IMR-90 (cell line): ENCODE measurements at regions of chr9 and their contacts with region 1.

Region 1: DNA sequence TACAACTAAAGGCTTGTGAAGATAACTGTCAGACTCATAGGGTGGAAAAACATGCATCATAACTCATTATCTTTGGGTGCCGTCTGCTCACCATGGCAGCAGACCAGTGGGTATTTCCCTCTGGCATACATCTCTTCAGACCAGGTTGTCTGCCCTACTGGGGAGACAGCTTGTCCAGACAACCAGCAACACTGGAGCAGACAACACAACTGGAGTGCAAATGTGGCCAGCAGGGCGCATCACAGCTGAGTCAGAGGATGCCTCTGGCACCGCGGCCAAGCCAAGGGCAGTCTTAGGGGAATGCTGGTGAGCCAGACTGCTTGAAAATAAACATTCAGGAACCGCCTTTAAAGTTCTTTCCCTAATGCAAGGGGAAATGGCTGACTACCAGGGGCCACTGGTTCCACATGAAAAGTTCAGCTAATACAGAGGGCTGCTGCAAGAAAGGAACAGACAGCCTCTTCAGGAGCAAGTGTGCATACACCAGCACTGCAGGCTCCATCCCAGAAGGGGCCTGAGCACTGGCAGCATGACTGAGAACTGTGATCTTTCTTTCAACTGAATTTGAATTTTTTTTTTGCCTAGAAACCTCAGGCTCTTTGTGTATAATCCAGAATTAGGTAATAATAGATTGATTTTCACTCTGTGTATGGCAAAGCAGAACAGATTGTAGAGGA is 77.3 kb downstream of the MAMDC2 start:
- DNase-seq: peak; percentile 97
- ATAC-seq: peak; percentile 95
- H3K4me3 ChIP-seq: no peak overlapping the region
- H3K27ac ChIP-seq: peak overlapping the region; percentile 54
- H3K4me1 ChIP-seq: peaks cover 15% of the 10 kb centered on the region
- H3K27me3 ChIP-seq: no peaks in the 10 kb centered on the region
- CTCF ChIP-seq: peak; percentile 47
- POLR2A ChIP-seq: no peak
- RAD21 ChIP-seq: peak; percentile 47

Region 2: GRCh38 chr9:70020991-70021571 is 99.9 kb before region 1 on chr9:
- CTCF ChIA-PET with region 1: no interaction called
- POLR2A ChIA-PET with region 1: no interaction called
- dilution Hi-C with region 1: no loop called
- in situ Hi-C with region 1: no loop called
- intact Hi-C with region 1: no loop called
- DNase-seq: peak; percentile 97
- ATAC-seq: peak; percentile 97
- H3K4me3 ChIP-seq: no peak overlapping the region
- H3K27ac ChIP-seq: 0 out of 2 replicates have a peak overlapping the region, but pooled peaks have one; percentile 18
- H3K4me1 ChIP-seq: peaks cover 5% of the 10 kb centered on the region
- H3K27me3 ChIP-seq: no peaks in the 10 kb centered on the region
- CTCF ChIP-seq: no peak
- POLR2A ChIP-seq: no peak
- RAD21 ChIP-seq: no peak

Region 3: DNA sequence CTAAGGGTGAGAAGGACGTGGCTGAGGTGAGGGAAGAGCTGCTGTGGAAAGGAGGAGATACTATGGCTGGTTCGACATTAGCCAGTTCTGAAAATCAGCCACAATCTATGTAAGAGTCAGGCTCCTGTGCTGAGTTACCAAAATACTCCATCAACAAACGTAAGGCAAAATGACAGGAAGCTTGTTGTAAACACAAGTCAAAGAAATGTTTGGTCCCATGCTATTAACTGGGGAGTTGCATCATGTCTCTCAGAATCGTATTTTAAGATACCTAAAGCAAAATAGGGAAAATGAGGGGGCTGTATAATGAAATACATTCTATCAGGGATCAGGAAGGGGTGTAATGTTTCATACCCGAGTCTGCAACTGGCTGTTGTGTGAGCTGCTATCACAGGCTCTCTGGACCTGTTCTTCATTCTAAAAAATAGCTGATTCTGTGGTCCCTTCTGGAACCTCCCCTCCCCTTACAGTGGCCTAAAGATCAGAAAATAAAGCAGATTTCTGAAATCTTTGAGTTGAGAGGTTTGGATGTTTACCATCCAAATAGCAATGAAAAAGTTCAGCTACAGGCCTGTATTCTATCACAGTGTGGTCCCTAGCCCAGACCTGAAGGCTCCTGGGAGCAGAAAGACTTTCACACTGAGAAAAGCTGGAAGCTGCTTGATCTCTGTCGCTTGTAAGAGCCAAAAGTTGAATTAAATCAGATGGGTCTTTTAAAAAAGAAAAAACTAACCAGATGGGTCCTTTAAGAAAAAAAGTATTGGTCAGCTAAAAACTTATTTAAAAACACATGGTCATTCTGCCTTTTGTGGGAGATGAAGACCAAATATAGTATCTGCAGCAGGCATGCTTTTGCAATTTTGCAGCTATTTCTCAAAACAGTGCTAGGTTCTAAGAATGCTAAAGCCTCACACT is 40.0 kb after region 1 on chr9:
- CTCF ChIA-PET with region 1: interaction called, 11 read pairs
- POLR2A ChIA-PET with region 1: no interaction called
- dilution Hi-C with region 1: no loop called
- in situ Hi-C with region 1: no loop called
- intact Hi-C with region 1: no loop called
- DNase-seq: peak; percentile 46
- ATAC-seq: peak; percentile 27
- H3K4me3 ChIP-seq: no peak overlapping the region
- H3K27ac ChIP-seq: peak overlapping the region; percentile 44; the same call in 1 of the 2 replicates
- H3K4me1 ChIP-seq: peaks cover 10% of the 10 kb centered on the region
- H3K27me3 ChIP-seq: no peaks in the 10 kb centered on the region
- CTCF ChIP-seq: no peak
- POLR2A ChIP-seq: no peak
- RAD21 ChIP-seq: no peak

Region 4: DNA sequence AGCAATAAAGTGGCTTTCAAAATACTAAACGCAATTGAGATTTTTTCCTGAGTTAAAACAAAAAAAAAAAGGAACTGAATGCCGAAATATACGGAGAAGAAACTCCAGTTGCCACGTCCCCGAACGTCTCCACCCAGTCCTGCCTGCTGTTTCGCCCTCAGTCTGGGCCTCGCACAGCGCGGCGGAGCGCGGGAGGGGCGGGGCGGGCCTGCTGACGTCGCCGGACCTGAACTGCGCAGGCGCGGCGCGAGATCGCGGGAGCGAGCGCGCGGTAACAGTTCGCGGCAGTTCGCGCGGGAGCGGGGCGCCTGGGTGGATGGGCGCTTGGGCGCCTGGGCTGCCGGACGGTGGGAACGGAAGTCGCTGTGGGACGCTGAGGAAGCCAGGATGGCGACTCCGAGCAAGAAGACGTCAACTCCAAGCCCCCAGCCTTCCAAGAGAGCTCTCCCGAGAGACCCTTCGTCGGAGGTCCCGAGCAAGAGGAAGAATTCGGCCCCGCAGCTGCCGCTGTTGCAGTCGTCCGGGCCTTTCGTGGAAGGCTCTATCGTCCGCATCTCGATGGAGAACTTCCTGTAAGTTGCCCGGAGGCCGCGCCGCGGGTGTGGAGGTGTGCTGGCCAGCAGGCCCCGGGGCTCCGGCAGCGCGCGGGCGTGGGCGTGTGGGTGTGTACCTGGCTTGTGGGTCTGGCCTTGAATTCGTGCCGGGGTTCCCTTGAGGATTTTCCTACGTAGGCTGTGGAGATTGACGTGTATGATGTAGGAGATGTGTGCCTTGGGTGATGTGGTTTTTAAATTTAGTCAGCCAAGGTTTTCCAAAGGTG is 137.9 kb after region 1 on chr9 and contains the start of gene SMC5:
- CTCF ChIA-PET with region 1: interaction called, 3 read pairs
- POLR2A ChIA-PET with region 1: no interaction called
- dilution Hi-C with region 1: no loop called
- in situ Hi-C with region 1: no loop called
- intact Hi-C with region 1: loop called (anchors 1 kb)
- DNase-seq: peak; percentile 92
- ATAC-seq: peak; percentile 84
- H3K4me3 ChIP-seq: peak within 1 kb of the TSS; percentile 75
- H3K27ac ChIP-seq: peak within 1 kb of the TSS; percentile 97
- H3K4me1 ChIP-seq: peaks cover 26% of the 10 kb centered on the region
- H3K27me3 ChIP-seq: no peaks in the 10 kb centered on the region
- CTCF ChIP-seq: no peak
- POLR2A ChIP-seq: peak; percentile 96
- RAD21 ChIP-seq: no peak
- total RNA-seq, gene SMC5: 12.0 and 25.8 TPM in 2 replicates

Region 5: GRCh38 chr9:70406434-70406862 is 285.5 kb after region 1 on chr9:
- CTCF ChIA-PET with region 1: no interaction called
- POLR2A ChIA-PET with region 1: no interaction called
- dilution Hi-C with region 1: no loop called
- in situ Hi-C with region 1: no loop called
- intact Hi-C with region 1: loop called (anchors 5 kb)
- DNase-seq: peak; percentile 62
- ATAC-seq: no peak
- H3K4me3 ChIP-seq: no peak overlapping the region
- H3K27ac ChIP-seq: peak overlapping the region; percentile 90
- H3K4me1 ChIP-seq: peaks cover 34% of the 10 kb centered on the region
- H3K27me3 ChIP-seq: no peaks in the 10 kb centered on the region
- CTCF ChIP-seq: no peak
- POLR2A ChIP-seq: peak; percentile 13; the same call in 1 of the 2 replicates
- RAD21 ChIP-seq: no peak